ENCODE measurements at regions of chr5 and their contacts with region 1.

Region 1: DNA sequence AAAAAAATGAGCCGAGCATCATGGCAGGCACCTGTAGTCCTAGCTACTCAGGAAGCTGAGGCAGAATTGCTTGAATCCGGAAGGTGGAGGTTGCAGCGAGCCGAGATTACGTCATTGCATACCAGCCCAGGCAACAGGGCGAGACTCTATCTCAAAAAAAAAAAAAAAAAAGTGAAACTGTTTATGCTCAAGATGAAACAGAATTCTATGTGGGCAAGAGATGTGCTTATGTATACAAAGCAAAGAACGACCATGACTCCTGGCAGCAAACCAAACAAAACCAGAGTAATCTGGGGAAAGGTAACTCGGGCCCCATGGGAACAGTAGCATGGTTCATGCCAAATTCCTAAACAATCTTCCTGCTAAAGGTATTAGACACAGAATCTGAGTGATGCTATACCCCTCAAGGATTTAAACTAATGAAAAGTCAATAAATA is 32.6 kb upstream of the PLAC8L1 start:
- DNase-seq: no peak
- ATAC-seq: no peak
- H3K4me3 ChIP-seq: no peak overlapping the region
- H3K27ac ChIP-seq: no peak overlapping the region
- H3K4me1 ChIP-seq: no peaks in the 10 kb centered on the region
- H3K27me3 ChIP-seq: no peaks in the 10 kb centered on the region
- CTCF ChIP-seq: no peak

Region 2: GRCh38 chr5:145443266-145443915 is 694.6 kb before region 1 on chr5:
- intact Hi-C with region 1: no loop called
- DNase-seq: no peak
- ATAC-seq: no peak
- H3K4me3 ChIP-seq: no peak overlapping the region
- H3K27ac ChIP-seq: no peak overlapping the region
- H3K4me1 ChIP-seq: no peaks in the 10 kb centered on the region
- H3K27me3 ChIP-seq: no peaks in the 10 kb centered on the region
- CTCF ChIP-seq: no peak

Region 3: GRCh38 chr5:146173597-146173996 is 35.6 kb after region 1 on chr5:
- intact Hi-C with region 1: no loop called
- DNase-seq: no peak
- ATAC-seq: no peak
- H3K4me3 ChIP-seq: no peak overlapping the region
- H3K27ac ChIP-seq: no peak overlapping the region
- H3K4me1 ChIP-seq: no peaks in the 10 kb centered on the region
- H3K27me3 ChIP-seq: no peaks in the 10 kb centered on the region
- CTCF ChIP-seq: no peak

Region 4: DNA sequence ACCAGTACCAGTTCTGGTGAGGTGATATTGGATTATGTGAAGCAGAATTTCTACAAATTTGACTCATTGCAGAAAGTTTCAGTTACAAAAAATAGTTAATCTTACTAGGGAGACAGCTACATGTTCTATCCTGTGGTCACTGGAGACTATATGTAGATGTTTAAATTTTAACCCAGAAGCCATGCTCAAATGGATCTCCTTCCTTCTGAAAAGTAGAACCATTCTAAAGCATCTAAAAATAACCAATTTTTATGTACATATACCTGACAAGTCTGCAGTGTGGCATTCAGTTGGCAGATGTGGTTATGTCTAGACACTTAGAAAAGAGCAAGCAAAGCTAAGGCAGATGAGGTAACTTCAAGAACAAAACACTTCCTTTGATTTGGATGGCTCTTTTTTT is 135.1 kb after region 1 on chr5:
- intact Hi-C with region 1: loop called in 1 of 10 experiments (anchors 10 kb)
- DNase-seq: no peak
- ATAC-seq: no peak
- H3K4me3 ChIP-seq: no peak overlapping the region
- H3K27ac ChIP-seq: no peak overlapping the region
- H3K4me1 ChIP-seq: no peaks in the 10 kb centered on the region
- H3K27me3 ChIP-seq: no peaks in the 10 kb centered on the region
- CTCF ChIP-seq: no peak

Measured in heart right ventricle (tissue), 16 donors.